GM12878 (cell line): ENCODE measurements at regions of chr12 and their contacts with region 1.

Region 1: DNA sequence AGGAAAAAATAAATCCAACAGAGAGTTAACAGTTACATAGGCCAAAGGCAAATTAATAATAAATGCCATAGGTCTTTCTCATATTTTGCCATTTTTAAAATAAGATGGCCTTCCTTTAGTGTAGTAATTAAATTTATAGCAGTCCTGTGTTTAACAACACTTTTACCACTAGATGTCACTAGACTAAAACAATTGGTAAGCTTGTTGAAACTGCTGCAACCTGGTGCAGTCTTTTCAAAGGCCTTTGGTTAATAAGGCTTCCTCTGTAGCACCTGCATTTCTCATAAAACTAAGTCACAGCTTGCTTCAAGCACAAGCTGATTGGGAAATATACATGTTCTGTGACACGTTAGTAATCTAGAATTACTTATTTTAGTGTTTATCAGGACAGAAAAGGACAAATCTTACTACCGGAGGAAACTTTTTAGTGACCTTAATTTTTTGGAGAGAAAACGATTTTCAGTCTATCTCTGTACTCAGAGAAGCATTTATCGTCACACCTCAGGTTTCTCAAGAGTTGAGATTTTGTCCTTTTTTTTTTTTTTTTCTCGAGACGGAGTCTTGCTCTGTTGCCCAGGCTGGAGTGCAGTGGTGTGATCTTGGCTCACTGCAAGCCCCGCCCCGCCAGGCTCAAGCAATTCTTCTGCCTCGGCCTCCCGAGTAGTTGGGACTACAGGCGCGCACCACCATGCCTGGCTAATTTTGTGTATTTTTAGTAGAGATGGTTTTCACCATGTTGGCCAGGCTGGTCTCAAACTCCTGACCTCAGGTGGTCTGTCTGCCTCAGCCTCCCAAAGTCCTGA is 20.0 kb downstream of the BORCS5 start:
- DNase-seq: peak; percentile 55
- ATAC-seq: peak; percentile 76
- H3K4me3 ChIP-seq: no peak overlapping the region
- H3K27ac ChIP-seq: no peak overlapping the region; the same call in 1 of the 2 replicates
- H3K4me1 ChIP-seq: peaks cover 6% of the 10 kb centered on the region
- H3K27me3 ChIP-seq: no peaks in the 10 kb centered on the region
- CTCF ChIP-seq: peak; percentile 41 to 81 (median 58); a peak in 5 of 6 replicates
- EP300 ChIP-seq: no peak
- POLR2A ChIP-seq: no peak
- RAD21 ChIP-seq: peak; percentile 98

Region 2: DNA sequence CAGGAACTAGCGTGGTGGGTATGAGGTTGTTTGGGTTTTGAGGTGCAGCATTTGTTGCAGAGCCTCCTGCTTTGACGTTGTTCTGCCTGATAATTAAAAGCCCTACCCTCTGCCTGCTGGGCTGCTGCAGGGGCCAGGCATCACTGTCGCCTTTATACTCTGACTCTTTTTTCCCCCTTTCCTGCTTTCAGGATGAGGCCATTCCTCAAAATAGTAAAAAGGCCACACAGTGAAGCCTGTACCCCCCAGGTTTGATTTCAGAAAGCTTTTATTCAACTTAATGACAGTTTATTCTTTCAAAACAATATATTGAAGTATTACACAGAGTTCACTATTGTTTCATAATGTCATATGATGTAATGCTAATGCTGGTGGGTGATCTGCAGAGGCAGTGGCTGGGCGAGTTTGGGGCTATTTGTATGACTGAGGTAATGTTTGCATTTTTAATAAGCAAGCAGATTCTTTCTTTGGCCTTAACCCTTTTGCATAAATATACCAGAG is 10.9 kb before region 1 on chr12:
- CTCF ChIA-PET with region 1: interaction called, 25 read pairs
- POLR2A ChIA-PET with region 1: interaction called, 3 read pairs
- RAD21 ChIA-PET with region 1: interaction called, 17 read pairs
- SMC1A ChIA-PET with region 1: interaction called, 39 read pairs
- in situ Hi-C with region 1: no loop called
- intact Hi-C with region 1: no loop called
- DNase-seq: no peak
- ATAC-seq: peak; percentile 66
- H3K4me3 ChIP-seq: no peak overlapping the region
- H3K27ac ChIP-seq: no peak overlapping the region
- H3K4me1 ChIP-seq: no peaks in the 10 kb centered on the region
- H3K27me3 ChIP-seq: no peaks in the 10 kb centered on the region
- CTCF ChIP-seq: no peak
- EP300 ChIP-seq: no peak
- POLR2A ChIP-seq: no peak
- RAD21 ChIP-seq: no peak

Region 3: DNA sequence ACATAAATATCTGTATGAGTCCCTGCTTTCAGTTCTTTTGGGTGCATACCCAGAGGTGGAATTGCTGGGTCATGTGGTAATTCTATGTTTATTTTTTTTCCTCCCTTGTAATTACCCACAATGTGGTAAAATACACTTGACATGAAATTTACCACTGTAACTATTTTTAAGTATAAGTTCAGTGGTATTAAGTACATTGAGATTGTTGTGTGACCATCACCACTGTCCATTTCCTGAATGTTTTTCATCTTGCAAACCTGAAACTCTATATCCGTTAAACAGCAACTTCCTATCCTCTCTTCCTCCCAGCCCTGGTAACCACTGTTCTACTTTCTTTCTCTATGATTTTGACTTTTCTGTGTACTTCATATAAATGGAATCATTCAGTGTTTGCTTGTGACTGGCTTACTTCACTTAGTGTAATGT is 31.4 kb after region 1 on chr12:
- CTCF ChIA-PET with region 1: no interaction called
- POLR2A ChIA-PET with region 1: no interaction called
- RAD21 ChIA-PET with region 1: no interaction called
- SMC1A ChIA-PET with region 1: no interaction called
- in situ Hi-C with region 1: no loop called
- intact Hi-C with region 1: no loop called
- DNase-seq: peak; percentile 25
- ATAC-seq: peak; percentile 84
- H3K4me3 ChIP-seq: no peak overlapping the region
- H3K27ac ChIP-seq: no peak overlapping the region; the same call in 1 of the 2 replicates
- H3K4me1 ChIP-seq: peaks cover 3% of the 10 kb centered on the region; the same call in 1 of the 2 replicates
- H3K27me3 ChIP-seq: no peaks in the 10 kb centered on the region
- CTCF ChIP-seq: no peak
- EP300 ChIP-seq: peak in 1 of 2 experiments; percentile 48; a peak in 1 of 4 replicates
- POLR2A ChIP-seq: no peak
- RAD21 ChIP-seq: no peak

Region 4: GRCh38 chr12:12474931-12475795 is 98.3 kb after region 1 on chr12:
- CTCF ChIA-PET with region 1: interaction called, 47 read pairs
- POLR2A ChIA-PET with region 1: interaction called, 6 read pairs
- RAD21 ChIA-PET with region 1: interaction called, 68 read pairs
- SMC1A ChIA-PET with region 1: interaction called, 75 read pairs
- in situ Hi-C with region 1: no loop called
- intact Hi-C with region 1: loop called (anchors 2 kb)
- DNase-seq: peak; percentile 87
- ATAC-seq: peak; percentile 98
- H3K4me3 ChIP-seq: 0 out of 2 replicates have a peak overlapping the region, but pooled peaks have one; percentile 30
- H3K27ac ChIP-seq: peak overlapping the region; percentile 94
- H3K4me1 ChIP-seq: peaks cover 24% of the 10 kb centered on the region
- H3K27me3 ChIP-seq: no peaks in the 10 kb centered on the region
- CTCF ChIP-seq: peak in 1 of 3 experiments; percentile 19; a peak in 1 of 6 replicates
- EP300 ChIP-seq: peak; percentile 82 to 88; a peak in 3 of 4 replicates
- POLR2A ChIP-seq: no peak
- RAD21 ChIP-seq: peak; percentile 61

Region 5: GRCh38 chr12:12486661-12487240 is 109.9 kb after region 1 on chr12:
- CTCF ChIA-PET with region 1: interaction called, 4 read pairs
- POLR2A ChIA-PET with region 1: interaction called, 4 read pairs
- RAD21 ChIA-PET with region 1: interaction called, 13 read pairs
- SMC1A ChIA-PET with region 1: interaction called, 11 read pairs
- in situ Hi-C with region 1: no loop called
- intact Hi-C with region 1: no loop called
- DNase-seq: peak; percentile 57
- ATAC-seq: peak; percentile 93
- H3K4me3 ChIP-seq: no peak overlapping the region
- H3K27ac ChIP-seq: peak overlapping the region; percentile 58
- H3K4me1 ChIP-seq: peaks cover 19% of the 10 kb centered on the region
- H3K27me3 ChIP-seq: no peaks in the 10 kb centered on the region
- CTCF ChIP-seq: no peak
- EP300 ChIP-seq: peak; percentile 96 to 98
- POLR2A ChIP-seq: no peak
- RAD21 ChIP-seq: no peak

Region 6: GRCh38 chr12:12654691-12655460 is 278.0 kb after region 1 on chr12:
- CTCF ChIA-PET with region 1: interaction called, 55 read pairs
- POLR2A ChIA-PET with region 1: interaction called, 6 read pairs
- RAD21 ChIA-PET with region 1: interaction called, 20 read pairs
- SMC1A ChIA-PET with region 1: interaction called, 67 read pairs
- in situ Hi-C with region 1: no loop called
- intact Hi-C with region 1: loop called (anchors 2 kb)
- DNase-seq: no peak
- ATAC-seq: 0 out of 3 replicates have a peak, but pooled peaks have one; percentile 8
- H3K4me3 ChIP-seq: no peak overlapping the region
- H3K27ac ChIP-seq: no peak overlapping the region
- H3K4me1 ChIP-seq: no peaks in the 10 kb centered on the region; the same call in 1 of the 2 replicates
- H3K27me3 ChIP-seq: no peaks in the 10 kb centered on the region
- CTCF ChIP-seq: no peak
- EP300 ChIP-seq: no peak
- POLR2A ChIP-seq: no peak
- RAD21 ChIP-seq: no peak

Region 7: DNA sequence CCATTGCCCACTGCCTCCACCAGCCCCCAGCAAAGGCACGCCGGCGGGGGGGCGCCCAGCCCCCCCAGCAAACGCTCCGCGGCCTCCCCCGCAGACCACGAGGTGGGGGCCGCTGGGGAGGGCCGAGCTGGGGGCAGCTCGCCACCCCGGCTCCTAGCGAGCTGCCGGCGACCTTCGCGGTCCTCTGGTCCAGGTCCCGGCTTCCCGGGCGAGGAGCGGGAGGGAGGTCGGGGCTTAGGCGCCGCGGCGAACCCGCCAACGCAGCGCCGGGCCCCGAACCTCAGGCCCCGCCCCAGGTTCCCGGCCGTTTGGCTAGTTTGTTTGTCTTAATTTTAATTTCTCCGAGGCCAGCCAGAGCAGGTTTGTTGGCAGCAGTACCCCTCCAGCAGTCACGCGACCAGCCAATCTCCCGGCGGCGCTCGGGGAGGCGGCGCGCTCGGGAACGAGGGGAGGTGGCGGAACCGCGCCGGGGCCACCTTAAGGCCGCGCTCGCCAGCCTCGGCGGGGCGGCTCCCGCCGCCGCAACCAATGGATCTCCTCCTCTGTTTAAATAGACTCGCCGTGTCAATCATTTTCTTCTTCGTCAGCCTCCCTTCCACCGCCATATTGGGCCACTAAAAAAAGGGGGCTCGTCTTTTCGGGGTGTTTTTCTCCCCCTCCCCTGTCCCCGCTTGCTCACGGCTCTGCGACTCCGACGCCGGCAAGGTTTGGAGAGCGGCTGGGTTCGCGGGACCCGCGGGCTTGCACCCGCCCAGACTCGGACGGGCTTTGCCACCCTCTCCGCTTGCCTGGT is 340.1 kb after region 1 on chr12 and contains the start of gene CDKN1B:
- CTCF ChIA-PET with region 1: interaction called, 4 read pairs
- POLR2A ChIA-PET with region 1: no interaction called
- RAD21 ChIA-PET with region 1: interaction called, 6 read pairs
- SMC1A ChIA-PET with region 1: interaction called, 11 read pairs
- in situ Hi-C with region 1: no loop called
- intact Hi-C with region 1: loop called (anchors 5 kb)
- DNase-seq: peak; percentile 58
- ATAC-seq: peak; percentile 74
- H3K4me3 ChIP-seq: peak within 1 kb of the TSS; percentile 97
- H3K27ac ChIP-seq: peak within 1 kb of the TSS; percentile 97
- H3K4me1 ChIP-seq: peaks cover 20% of the 10 kb centered on the region
- H3K27me3 ChIP-seq: no peaks in the 10 kb centered on the region
- CTCF ChIP-seq: no peak
- EP300 ChIP-seq: no peak
- POLR2A ChIP-seq: peak; percentile 75
- RAD21 ChIP-seq: no peak
- polyA plus RNA-seq, gene CDKN1B: 4.2 to 8.0 TPM